GM12878 (cell line): ENCODE measurements at regions of chr6 and their contacts with region 1.

Region 1: GRCh38 chr6:52724406-52725121 is 38.7 kb downstream of the GSTA2 start:
- DNase-seq: peak; percentile 55
- ATAC-seq: peak; percentile 100
- H3K4me3 ChIP-seq: no peak overlapping the region
- H3K27ac ChIP-seq: no peak overlapping the region
- H3K4me1 ChIP-seq: peaks cover 5% of the 10 kb centered on the region
- H3K27me3 ChIP-seq: no peaks in the 10 kb centered on the region
- CTCF ChIP-seq: peak; percentile 82 to 95 (median 91)
- EP300 ChIP-seq: no peak
- POLR2A ChIP-seq: no peak
- RAD21 ChIP-seq: peak; percentile 53

Region 2: DNA sequence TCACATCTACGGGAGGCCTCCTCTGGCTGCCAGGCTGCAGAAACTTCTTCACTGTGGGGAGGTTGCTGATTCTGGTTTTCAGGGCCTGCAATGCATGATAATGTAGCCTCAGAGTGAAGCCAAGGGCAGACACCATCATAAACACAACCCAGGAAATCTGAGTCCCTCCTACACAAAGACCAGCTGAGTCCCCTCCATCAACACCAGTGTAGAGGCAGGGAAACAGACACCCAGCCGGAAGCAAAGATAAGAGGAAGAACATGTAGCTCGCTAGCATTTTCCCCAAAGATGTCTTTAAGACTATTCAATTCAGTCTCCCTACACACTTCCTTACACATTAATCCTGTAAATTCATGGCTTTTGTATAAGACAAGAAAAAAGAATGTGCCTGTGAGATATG is 15.1 kb after region 1 on chr6:
- CTCF ChIA-PET with region 1: interaction called, 13 read pairs
- POLR2A ChIA-PET with region 1: no interaction called
- RAD21 ChIA-PET with region 1: no interaction called
- SMC1A ChIA-PET with region 1: interaction called, 5 read pairs
- in situ Hi-C with region 1: no loop called
- intact Hi-C with region 1: no loop called
- DNase-seq: no peak
- ATAC-seq: no peak
- H3K4me3 ChIP-seq: no peak overlapping the region
- H3K27ac ChIP-seq: no peak overlapping the region
- H3K4me1 ChIP-seq: no peaks in the 10 kb centered on the region
- H3K27me3 ChIP-seq: no peaks in the 10 kb centered on the region; a peak in 2 of 4 replicates
- CTCF ChIP-seq: no peak
- EP300 ChIP-seq: no peak
- POLR2A ChIP-seq: no peak
- RAD21 ChIP-seq: no peak